Ascending aorta (tissue), 2 donors: ENCODE measurements at regions of chrX and their contacts with region 1.

Region 1: GRCh38 chrX:34365482-34365881 is 233.4 kb upstream of the FAM47A start:
- DNase-seq: no peak
- H3K4me3 ChIP-seq: no peak overlapping the region
- H3K27ac ChIP-seq: no peak overlapping the region
- H3K4me1 ChIP-seq: no peaks in the 10 kb centered on the region
- H3K27me3 ChIP-seq: no peaks in the 10 kb centered on the region
- CTCF ChIP-seq: peak in 2 of 3 experiments; percentile 19 to 52

Region 2: DNA sequence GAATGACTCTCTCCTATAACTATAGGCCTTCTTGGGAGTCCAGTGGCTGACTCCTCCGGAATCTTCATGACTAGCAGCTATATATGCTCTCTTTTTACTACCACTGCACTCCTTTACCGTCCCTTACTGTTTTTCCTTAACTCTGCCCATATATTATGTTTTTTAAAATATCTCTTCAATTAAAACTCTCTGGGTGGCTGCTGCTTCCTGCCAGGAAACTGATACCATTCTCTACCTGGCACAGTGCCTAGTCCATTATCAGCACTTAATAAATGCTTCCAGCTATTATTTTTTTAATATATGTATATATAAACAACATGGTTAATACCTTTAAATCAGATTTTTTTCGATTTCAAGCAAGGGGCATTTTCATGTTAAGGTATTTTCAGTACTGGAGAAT is 440.5 kb after region 1 on chrX:
- intact Hi-C with region 1: loop called (anchors 10 kb)
- DNase-seq: no peak
- H3K4me3 ChIP-seq: no peak overlapping the region
- H3K27ac ChIP-seq: no peak overlapping the region
- H3K4me1 ChIP-seq: peaks cover 0 to 2% of the 10 kb centered on the region in 2 donors
- H3K27me3 ChIP-seq: no peaks in the 10 kb centered on the region
- CTCF ChIP-seq: no peak